ENCODE measurements at regions of chr7 and their contacts with region 1.

Region 1: DNA sequence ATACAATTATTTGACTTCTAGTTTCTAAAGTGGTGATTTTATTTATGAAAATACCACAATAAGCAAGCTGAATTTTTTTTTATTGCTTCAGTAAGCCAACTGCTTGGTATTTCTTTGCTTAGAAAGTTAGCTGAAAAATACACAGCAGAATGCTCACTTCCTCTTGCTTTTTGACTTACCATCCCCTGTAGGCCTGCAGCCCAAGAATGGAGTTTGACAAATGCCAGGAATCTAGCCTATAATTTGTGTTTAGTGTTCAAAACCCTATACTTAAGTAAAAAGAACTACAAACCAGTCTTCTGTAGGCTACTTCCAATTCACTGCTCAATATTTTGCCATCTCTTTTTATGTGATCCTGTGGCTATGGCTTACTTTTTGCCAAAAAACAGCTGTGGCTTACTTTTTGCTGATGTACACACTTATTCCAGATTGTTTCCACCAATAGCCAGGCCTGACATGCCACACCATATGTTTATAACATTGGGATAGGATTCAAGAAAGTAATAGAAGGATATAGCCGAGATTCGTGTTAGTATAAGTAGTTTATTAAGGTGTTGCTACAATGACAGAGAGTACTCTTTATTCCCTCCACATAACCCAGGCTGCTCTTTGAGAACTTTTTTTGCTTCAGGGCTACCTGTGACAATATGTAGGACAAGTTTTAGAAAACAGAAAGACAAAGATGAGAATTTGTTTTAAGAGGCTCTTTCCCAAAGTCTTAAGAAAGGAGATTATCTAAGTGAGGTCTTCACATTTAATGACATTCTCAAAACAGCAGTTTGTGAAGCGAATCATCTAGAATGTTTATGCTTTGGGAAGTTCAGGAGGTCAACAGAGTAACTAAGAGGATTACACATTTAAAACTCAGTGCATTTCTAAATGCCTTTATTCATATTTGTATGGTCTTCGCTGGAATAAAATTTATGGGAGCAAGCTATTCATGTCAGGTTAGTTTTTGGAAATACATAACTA is 263.9 kb upstream of the FZD1 start:
- DNase-seq: no peak
- ATAC-seq: no peak
- H3K4me3 ChIP-seq: no peak overlapping the region
- H3K27ac ChIP-seq: no peak overlapping the region
- H3K4me1 ChIP-seq: no peaks in the 10 kb centered on the region
- H3K27me3 ChIP-seq: no peaks in the 10 kb centered on the region
- CTCF ChIP-seq: no peak
- EP300 ChIP-seq: no peak
- POLR2A ChIP-seq: no peak
- RAD21 ChIP-seq: no peak

Region 2: GRCh38 chr7:90708841-90709317 is 291.4 kb before region 1 on chr7:
- CTCF ChIA-PET with region 1: no interaction called
- POLR2A ChIA-PET with region 1: no interaction called
- in situ Hi-C with region 1: loop called (anchors 25 kb)
- intact Hi-C with region 1: no loop called
- DNase-seq: peak; percentile 43
- ATAC-seq: peak; percentile 83
- H3K4me3 ChIP-seq: no peak overlapping the region
- H3K27ac ChIP-seq: no peak overlapping the region
- H3K4me1 ChIP-seq: no peaks in the 10 kb centered on the region
- H3K27me3 ChIP-seq: no peaks in the 10 kb centered on the region
- CTCF ChIP-seq: peak; percentile 75
- EP300 ChIP-seq: no peak
- POLR2A ChIP-seq: no peak
- RAD21 ChIP-seq: peak; percentile 45

Measured in HepG2 (cell line).